Activated CD8-positive, alpha-beta memory T cell treated with anti-CD3 and anti-CD28 coated beads, Interleukin-2, amount 10 ng/mL, durations not matched to agents 7 days and 5 days (primary cell): ENCODE measurements at regions of chrX and their contacts with region 1.

Region 1: DNA sequence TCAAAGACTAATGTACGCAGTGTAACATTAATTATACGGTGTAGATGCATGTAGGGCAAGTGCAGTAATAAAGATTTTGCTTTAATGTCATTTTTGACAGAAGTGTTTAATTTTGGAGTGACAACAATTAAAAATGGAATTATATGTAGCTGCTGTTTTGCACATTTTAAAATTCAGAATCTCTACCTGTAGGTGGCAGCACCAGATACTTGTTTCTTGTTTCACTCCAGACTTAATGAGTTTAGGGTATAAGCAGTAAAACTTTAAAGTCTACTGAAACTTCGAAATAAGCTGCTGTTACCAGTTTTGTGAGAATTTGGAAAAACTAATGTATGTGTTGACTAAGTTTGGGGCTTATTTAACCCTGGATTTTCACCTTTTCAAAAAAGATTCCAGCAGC is 144.9 kb downstream of the POLA1 start:
- DNase-seq: no peak
- ATAC-seq: no peak
- H3K4me3 Mint-ChIP-seq: no peak overlapping the region
- H3K27ac Mint-ChIP-seq: no peak overlapping the region
- H3K4me1 Mint-ChIP-seq: peaks cover 2% of the 10 kb centered on the region
- H3K27me3 Mint-ChIP-seq: no peaks in the 10 kb centered on the region

Region 2: GRCh38 chrX:24828147-24828546 is 10.5 kb before region 1 on chrX:
- CTCF ChIA-PET with region 1: interaction called, 10 read pairs
- DNase-seq: no peak
- ATAC-seq: no peak
- H3K4me3 Mint-ChIP-seq: no peak overlapping the region
- H3K27ac Mint-ChIP-seq: no peak overlapping the region
- H3K4me1 Mint-ChIP-seq: no peaks in the 10 kb centered on the region
- H3K27me3 Mint-ChIP-seq: no peaks in the 10 kb centered on the region

Region 3: GRCh38 chrX:24982306-24982965 is 143.8 kb after region 1 on chrX:
- CTCF ChIA-PET with region 1: no interaction called
- DNase-seq: no peak
- ATAC-seq: no peak
- H3K4me3 Mint-ChIP-seq: no peak overlapping the region
- H3K27ac Mint-ChIP-seq: no peak overlapping the region
- H3K4me1 Mint-ChIP-seq: peaks cover 2% of the 10 kb centered on the region
- H3K27me3 Mint-ChIP-seq: no peaks in the 10 kb centered on the region

Region 4: GRCh38 chrX:25020905-25021449 is 182.3 kb after region 1 on chrX:
- CTCF ChIA-PET with region 1: interaction called, 15 read pairs
- DNase-seq: peak; percentile 45
- ATAC-seq: peak; percentile 76
- H3K4me3 Mint-ChIP-seq: no peak overlapping the region
- H3K27ac Mint-ChIP-seq: no peak overlapping the region
- H3K4me1 Mint-ChIP-seq: peaks cover 12% of the 10 kb centered on the region
- H3K27me3 Mint-ChIP-seq: peaks cover 84% of the 10 kb centered on the region

Region 5: DNA sequence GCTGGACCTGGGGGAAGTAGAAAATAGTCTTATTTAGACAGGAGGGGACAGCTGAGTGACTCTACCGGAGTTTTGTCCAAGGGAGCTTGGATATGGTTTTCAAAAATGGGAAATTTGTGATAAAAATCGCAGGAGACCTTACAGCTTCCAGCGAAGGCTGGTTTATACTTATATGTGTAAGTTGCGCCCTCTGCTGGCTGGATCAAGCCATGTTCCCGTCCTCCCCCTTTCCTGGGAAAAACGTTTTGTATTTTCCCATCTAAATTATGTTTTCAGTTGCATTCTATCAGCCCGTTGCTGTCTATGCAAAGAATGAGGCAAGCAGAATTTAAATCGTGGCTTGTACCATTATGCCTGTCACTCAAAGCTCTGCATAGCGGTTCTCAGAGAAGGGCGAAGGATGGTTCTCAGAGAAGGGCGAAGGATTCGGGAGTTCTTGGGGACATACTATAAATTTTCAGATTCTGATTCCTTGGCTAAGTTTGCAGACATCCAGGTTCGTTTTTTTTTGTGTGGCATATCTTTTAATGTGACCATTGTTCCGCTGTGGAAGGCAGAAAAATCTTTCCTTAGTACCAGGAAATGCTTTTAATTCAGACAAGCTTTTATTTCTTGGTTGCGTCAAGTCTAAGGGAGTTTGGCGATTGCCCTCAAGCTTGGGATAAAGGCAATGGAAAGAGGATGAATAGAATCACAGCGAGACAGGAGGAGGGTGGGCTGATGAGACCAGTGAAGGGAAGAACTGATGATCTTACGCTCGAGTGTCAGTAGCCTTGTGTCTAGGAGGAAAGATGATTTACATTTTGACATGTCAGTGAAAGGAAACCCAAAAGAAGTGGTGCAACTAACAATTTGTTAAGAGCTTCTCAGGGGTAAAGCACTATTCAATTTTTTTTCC is 305.7 kb after region 1 on chrX:
- CTCF ChIA-PET with region 1: interaction called, 18 read pairs
- DNase-seq: peak; percentile 39
- ATAC-seq: no peak
- H3K4me3 Mint-ChIP-seq: no peak overlapping the region
- H3K27ac Mint-ChIP-seq: no peak overlapping the region
- H3K4me1 Mint-ChIP-seq: no peaks in the 10 kb centered on the region
- H3K27me3 Mint-ChIP-seq: peaks cover 17% of the 10 kb centered on the region